Right lobe of liver (tissue), 6 donors: ENCODE measurements at regions of chr6 and their contacts with region 1.

Region 1: GRCh38 chr6:39980839-39981580 is 46.7 kb upstream of the MOCS1 start:
- DNase-seq: no peak
- ATAC-seq: peak; percentile 85 to 89 (median 86)
- H3K4me3 ChIP-seq: no peak overlapping the region
- H3K27ac ChIP-seq: no peak overlapping the region
- H3K4me1 ChIP-seq: peaks cover 0 to 22% (median 7%) of the 10 kb centered on the region in 4 donors
- H3K27me3 ChIP-seq: no peaks in the 10 kb centered on the region
- CTCF ChIP-seq: peak; percentile 38 to 56 (median 48)
- POLR2A ChIP-seq: no peak

Region 2: GRCh38 chr6:40308533-40309306 is 327.7 kb after region 1 on chr6:
- intact Hi-C with region 1: loop called (anchors 10 kb)
- DNase-seq: peak in 2 of 3 donors; percentile 45 to 65
- ATAC-seq: peak; percentile 80 to 89 (median 84)
- H3K4me3 ChIP-seq: no peak overlapping the region
- H3K27ac ChIP-seq: no peak overlapping the region
- H3K4me1 ChIP-seq: no peaks in the 10 kb centered on the region
- H3K27me3 ChIP-seq: no peaks in the 10 kb centered on the region
- CTCF ChIP-seq: peak; percentile 86 to 94 (median 91)
- POLR2A ChIP-seq: no peak